ENCODE measurements at regions of chr15 and their contacts with region 1.

Region 1: DNA sequence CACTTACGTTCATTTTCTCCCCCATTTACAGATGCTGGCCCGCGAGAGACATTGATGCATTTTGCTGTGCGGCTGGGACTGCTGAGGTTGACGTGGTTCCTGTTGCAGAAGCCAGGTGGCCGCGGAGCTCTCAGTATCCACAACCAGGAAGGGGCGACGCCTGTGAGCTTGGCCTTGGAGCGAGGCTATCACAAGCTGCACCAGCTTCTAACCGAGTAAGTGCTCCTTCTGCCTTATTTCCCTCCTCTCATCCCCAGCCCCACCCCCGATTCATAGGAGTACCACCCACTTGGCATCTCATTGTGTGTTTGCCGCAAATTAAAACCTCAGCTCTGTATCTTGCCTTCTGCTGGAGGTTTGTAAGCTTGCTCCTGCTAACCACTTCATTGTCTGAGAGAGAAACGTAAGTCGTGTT is 163.3 kb downstream of the AKAP13 start:
- DNase-seq: peak; percentile 75
- ATAC-seq: peak; percentile 35
- H3K4me3 Mint-ChIP-seq: peak overlapping the region; percentile 61
- H3K27ac Mint-ChIP-seq: peak overlapping the region; percentile 74
- H3K4me1 Mint-ChIP-seq: peaks cover 82% of the 10 kb centered on the region
- H3K27me3 Mint-ChIP-seq: no peaks in the 10 kb centered on the region
- CTCF ChIP-seq: no peak

Region 2: GRCh38 chr15:85112997-85113396 is 430.8 kb before region 1 on chr15:
- CTCF ChIA-PET with region 1: no interaction called
- POLR2A ChIA-PET with region 1: no interaction called
- intact Hi-C with region 1: no loop called
- DNase-seq: no peak
- ATAC-seq: no peak
- H3K4me3 Mint-ChIP-seq: no peak overlapping the region
- H3K27ac Mint-ChIP-seq: no peak overlapping the region
- H3K4me1 Mint-ChIP-seq: peaks cover 18% of the 10 kb centered on the region
- H3K27me3 Mint-ChIP-seq: no peaks in the 10 kb centered on the region
- CTCF ChIP-seq: no peak

Region 3: DNA sequence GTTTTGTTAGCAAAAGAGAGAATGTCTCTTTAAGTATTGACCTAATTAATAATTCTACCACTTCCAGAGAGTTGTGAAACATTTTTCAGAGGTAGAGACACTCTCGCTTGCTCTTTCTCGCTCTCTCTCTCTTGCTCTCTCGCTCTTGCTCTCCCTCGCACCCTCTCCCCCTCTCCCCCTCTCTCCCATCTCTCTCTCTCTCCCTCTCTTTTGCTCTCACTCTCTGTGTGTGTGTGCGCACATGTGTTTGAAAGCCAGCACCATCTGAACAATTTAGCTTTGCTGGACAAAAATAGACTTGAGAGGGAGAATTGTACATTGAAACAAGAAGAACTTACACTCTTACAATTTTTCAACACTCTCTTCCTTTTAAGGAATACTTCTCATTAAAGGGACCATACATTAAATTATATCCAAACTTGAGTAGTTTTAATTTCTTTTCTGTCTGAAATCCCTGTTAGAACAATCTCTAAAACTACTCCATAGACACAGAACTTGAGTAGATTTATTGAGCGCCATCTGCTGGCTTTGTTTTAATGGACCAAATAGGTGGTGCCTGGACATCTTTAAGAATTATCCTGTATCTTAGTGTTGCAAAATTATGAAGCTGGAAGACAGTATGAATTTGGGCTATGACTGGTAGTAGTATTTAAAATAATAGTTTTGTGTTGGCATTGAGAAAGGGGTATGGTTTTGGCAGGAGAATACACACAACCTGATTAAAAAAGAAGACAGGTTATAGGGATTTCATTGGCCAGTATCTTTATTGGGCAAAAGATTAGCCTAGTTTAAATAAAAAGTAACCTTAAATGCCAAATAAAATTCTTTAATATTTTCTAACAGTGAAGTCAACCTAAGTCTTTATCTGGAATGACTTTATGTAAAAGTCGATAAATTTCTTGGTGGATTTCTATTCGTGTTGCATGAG is 38.7 kb before region 1 on chr15:
- CTCF ChIA-PET with region 1: interaction called, 11 read pairs
- POLR2A ChIA-PET with region 1: interaction called, 4 read pairs
- intact Hi-C with region 1: no loop called
- DNase-seq: peak; percentile 68
- ATAC-seq: peak; percentile 67
- H3K4me3 Mint-ChIP-seq: no peak overlapping the region
- H3K27ac Mint-ChIP-seq: no peak overlapping the region
- H3K4me1 Mint-ChIP-seq: peaks cover 53% of the 10 kb centered on the region
- H3K27me3 Mint-ChIP-seq: no peaks in the 10 kb centered on the region
- CTCF ChIP-seq: peak; percentile 68

Region 4: DNA sequence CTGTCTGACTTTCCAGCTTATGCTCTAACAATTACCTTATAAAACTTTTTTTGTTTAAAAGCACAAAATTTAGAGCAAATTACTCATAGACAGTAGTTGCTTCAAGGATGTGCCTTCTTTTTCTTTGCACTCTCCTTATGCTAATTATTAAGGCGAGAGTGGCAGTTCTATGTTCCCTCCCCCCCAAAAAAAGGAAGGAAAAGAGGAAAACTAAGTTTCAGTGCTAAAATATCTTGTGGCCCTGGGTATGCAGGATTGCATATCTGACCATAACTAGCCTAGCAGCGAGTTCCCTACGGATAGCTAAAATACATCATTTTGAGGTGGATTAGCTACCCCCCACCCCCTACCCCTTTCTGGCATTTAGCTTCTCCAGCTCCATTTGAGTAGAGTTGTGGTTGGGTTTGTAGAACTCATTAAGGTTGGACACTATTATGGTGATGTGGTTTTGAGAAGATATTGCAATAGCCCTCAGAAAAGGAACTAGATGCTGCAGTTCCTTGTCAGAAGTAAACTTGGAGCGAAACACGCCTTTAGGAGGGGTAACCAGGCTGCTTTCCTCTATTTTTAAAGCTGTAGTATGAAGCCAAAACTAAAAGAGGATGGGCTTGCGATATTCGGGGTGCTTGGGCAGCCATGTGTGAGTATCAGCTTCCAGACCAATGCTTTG is 11.2 kb after region 1 on chr15:
- CTCF ChIA-PET with region 1: interaction called, 24 read pairs
- POLR2A ChIA-PET with region 1: interaction called, 7 read pairs
- intact Hi-C with region 1: no loop called
- DNase-seq: no peak
- ATAC-seq: peak; percentile 17
- H3K4me3 Mint-ChIP-seq: peak overlapping the region; percentile 39
- H3K27ac Mint-ChIP-seq: peak overlapping the region; percentile 80
- H3K4me1 Mint-ChIP-seq: peaks cover 68% of the 10 kb centered on the region
- H3K27me3 Mint-ChIP-seq: no peaks in the 10 kb centered on the region
- CTCF ChIP-seq: no peak